GM18951 (cell line): ENCODE measurements at regions of chr3 and their contacts with region 1.

Region 1: DNA sequence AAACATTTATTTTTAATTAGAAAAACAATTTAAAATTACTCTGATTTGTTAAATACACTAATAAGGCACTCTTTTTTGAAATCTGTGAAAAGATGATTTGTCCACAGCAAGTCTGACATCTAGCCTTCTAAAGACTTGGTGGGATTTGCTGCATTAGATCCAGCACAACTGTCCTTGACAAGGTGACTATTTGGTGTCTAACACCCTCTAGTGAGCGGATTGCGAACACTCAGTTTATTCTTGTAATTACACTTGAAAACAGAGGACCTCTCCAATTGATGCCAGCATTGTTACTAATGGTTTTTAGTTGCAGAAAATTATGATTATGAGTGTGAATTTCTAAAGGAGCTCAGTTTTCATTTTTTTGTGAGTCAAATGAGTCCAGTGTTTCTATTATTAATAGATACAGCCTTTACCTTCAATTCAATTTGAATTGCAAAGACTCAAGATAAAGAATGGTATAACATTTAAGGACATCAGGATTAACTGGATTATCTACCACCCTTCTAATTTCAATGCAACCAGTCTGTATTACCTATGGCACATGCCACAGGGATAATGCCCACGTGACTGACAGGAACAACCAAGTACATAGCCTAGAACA is 29.7 kb upstream of the STRIT1 start:
- POLR2A ChIP-seq: no peak

Region 2: GRCh38 chr3:154334973-154335420 is 988.2 kb before region 1 on chr3:
- in situ Hi-C with region 1: loop called (anchors 25 kb)
- POLR2A ChIP-seq: no peak

Region 3: DNA sequence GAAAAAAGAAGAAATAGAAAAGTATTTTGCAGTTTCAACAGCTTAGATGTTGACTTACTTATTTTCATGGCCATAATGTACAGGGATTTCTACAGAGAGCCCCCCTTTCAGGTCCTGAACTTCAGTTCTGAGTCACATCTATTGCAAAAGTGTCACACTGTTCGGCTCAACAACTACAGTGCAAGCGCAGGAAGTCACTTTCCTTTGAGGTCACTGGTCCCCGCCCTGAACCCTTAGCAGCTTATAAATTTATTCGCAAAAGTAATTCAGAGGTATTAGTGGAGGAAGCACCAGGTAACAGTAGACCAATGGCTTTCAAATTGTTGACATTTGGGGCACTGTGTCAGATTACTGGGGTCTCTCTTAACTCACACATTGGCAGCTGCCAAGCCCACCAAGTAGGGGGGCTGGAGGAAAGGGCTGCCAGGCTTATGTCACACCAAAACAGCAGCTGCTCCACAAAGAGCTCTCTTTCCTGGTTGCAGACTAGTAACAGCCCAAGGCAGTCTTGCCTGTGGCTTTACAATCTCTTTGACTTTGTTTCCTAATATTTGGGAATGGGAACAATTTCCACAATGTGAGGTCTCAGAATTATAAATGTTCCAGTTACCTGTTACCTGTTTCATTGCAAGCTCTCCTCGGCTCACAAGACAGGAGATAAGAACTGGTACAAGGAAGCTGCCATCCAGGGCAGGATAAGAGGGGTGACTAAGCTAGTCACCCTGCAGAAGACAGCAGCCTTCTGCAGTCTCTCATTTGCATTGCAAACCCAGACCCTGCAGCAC is 100.6 kb after region 1 on chr3:
- in situ Hi-C with region 1: no loop called
- POLR2A ChIP-seq: no peak